Prostate gland (tissue), 2 donors: ENCODE measurements at regions of chr22 and their contacts with region 1.

Region 1: DNA sequence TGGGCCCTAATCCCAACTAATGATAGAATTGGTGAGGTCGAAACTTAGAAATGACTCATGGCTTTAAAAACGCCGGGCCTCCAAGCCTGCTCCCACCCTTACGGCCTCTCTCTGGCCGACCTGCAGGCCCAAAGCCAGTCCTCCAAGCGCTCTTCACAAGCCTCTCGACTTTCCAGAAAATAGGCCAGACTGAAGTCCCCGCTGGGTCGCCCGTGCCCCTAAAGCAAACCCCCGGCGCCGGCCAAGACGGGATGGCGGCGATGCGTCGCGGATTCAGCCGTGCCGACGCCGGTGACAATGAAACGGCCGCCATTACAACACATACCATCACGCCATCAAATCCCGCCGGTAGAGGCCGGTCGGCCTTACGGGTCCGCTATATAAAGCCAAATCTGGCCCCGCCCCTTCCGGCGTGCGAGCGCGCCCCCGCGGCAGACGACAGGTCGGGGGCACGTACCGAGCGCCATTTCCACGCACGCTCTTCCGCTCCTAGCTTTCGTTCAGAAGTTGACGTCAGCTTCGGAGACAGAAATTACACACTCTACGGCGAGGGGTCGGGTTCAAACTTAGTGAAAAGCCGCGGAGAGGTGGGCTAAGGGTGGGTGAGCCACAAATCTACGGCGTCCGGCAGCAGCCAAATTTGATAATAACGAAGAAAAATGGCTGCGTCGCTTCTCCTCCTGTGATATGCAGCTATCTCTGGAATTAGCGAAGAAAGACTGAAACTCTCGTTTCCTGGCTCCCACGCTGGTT is at the start of gene RPL3:
- DNase-seq: peak; percentile 96
- H3K4me3 ChIP-seq: peak within 1 kb of the TSS; percentile 55 to 61
- H3K27ac ChIP-seq: peak within 1 kb of the TSS; percentile 95 to 96
- H3K4me1 ChIP-seq: peaks cover 21% of the 10 kb centered on the region
- H3K27me3 ChIP-seq: no peaks in the 10 kb centered on the region
- CTCF ChIP-seq: peak in 3 of 4 experiments; percentile 40 to 62 (median 47)
- POLR2A ChIP-seq: peak; percentile 78
- total RNA-seq, gene RPL3: 2,375 to 2,654 TPM

Region 2: DNA sequence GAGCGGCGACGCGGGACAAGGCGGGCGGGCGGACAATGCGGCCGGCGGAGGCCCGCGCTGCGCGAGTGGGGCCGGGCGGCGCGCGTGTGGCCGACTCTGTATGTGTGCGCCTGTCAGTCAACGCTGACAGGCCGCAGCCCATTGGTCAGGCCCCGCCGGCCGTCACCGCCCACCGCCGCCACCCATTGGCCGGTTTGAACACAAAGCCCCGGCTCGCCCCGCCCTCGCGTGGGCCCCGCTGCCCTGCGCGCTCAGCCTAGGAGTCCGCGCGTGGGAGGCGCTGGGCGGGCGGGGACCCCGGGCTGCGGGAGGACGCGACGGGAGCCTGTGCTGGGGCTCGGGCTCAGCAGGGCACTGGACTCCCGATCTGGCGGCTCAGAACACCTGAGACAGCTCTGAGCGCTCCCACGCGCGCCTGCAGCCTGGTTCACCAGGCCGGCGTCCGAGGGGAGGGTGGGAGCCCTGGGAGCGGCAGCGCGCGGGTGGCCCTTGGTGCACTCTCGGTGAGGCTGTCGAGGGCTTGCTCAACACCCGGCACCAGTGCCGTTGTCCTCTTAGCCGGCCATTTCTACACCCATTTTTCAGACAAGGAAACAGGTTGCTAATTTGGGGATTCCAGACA is 563.4 kb before region 1 on chr22 and contains the start of gene SUN2:
- intact Hi-C with region 1: loop called (anchors 10 kb)
- DNase-seq: peak; percentile 95
- H3K4me3 ChIP-seq: peak within 1 kb of the TSS; percentile 73 to 82
- H3K27ac ChIP-seq: peak within 1 kb of the TSS; percentile 97 to 99
- H3K4me1 ChIP-seq: peaks cover 20% of the 10 kb centered on the region
- H3K27me3 ChIP-seq: no peaks in the 10 kb centered on the region
- CTCF ChIP-seq: no peak
- POLR2A ChIP-seq: peak; percentile 80
- total RNA-seq, gene SUN2: 401 to 445 TPM

Region 3: DNA sequence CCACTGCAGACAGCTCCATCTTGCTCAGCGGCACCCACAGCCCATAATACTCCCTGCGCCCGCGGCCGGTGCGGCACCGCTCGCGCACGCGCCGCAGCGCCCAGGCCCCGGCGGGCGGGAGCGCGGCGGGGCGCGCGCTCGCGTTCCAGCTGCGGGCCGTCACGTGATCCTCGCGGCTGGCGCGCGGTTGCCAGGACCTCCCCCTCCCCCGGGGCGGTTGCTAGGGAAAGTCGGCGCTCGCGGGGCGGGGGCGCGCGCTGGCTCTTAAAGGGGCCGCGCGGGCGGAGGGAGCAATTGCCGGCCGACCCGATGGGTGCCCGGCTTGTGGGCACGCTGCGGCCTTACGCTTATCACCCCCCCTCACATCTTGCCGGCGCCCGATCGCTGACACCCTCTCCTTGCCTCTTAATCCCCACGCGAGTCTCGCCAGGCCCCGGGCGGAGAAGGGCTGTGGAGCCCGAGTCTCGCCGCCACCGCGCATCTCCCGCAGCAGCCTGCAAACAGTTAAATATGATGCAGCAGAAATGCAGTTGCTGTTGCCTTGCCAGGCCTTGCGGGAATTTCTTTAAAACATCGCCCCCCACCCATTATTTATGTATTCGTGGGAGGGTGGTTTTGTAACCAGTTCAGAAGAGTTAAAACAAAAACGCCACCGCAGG is 447.1 kb before region 1 on chr22 and contains the start of gene CBX6:
- intact Hi-C with region 1: loop called (anchors 5 kb)
- DNase-seq: peak; percentile 93
- H3K4me3 ChIP-seq: peak within 1 kb of the TSS; percentile 66 to 81
- H3K27ac ChIP-seq: peak within 1 kb of the TSS; percentile 93 to 94
- H3K4me1 ChIP-seq: peaks cover 9% of the 10 kb centered on the region
- H3K27me3 ChIP-seq: no peaks in the 10 kb centered on the region
- CTCF ChIP-seq: peak in 2 of 4 experiments; percentile 14 to 16
- POLR2A ChIP-seq: peak; percentile 60
- total RNA-seq, gene CBX6: 39.9 to 56.2 TPM

Region 4: GRCh38 chr22:39013942-39014722 is 305.3 kb before region 1 on chr22 and contains the start of gene APOBEC3C:
- intact Hi-C with region 1: loop called (anchors 10 kb)
- DNase-seq: peak; percentile 85
- H3K4me3 ChIP-seq: peak within 1 kb of the TSS; percentile 38 to 39
- H3K27ac ChIP-seq: peak within 1 kb of the TSS; percentile 85 to 88
- H3K4me1 ChIP-seq: no peaks in the 10 kb centered on the region
- H3K27me3 ChIP-seq: no peaks in the 10 kb centered on the region
- CTCF ChIP-seq: peak in 1 of 4 experiments; percentile 32
- POLR2A ChIP-seq: peak; percentile 89
- total RNA-seq, gene APOBEC3C: 21.4 to 52.3 TPM

Region 5: DNA sequence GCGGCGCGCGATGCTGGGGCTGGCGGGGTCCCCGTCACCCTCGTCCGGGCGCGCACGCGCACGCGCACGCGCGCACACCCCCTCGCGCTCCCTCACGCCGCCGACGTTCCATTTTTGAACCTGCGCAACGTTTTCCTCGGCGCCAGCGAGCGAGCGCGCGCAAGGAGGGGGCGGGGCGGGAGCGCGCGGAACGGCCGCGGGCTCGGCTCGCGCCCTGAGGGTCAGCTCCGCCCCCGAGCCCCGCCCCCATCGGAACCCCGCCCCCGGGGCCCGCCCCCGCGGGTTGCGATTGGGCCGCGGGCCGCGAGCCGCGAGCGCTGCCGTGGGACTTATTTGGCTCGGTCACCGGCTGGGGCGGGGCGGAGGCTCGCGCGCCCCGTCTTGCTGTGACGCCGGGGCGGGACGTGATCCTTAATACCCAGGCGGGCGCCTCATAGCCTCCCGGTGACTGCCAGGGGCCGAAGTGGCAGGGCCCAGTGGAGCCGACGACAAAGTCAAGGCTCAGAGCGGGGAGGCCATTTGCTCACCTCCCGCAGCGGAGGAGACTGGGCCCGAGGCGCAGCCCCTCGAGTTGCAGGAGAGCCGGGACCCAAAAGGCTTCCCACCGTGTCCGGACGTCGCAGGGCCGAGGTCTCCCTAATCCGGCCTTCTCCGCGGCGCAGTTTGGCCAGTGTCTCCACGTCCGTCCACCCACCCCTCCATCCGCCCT is 166.8 kb before region 1 on chr22 and contains the start of gene CBX7:
- intact Hi-C with region 1: loop called (anchors 5 kb)
- DNase-seq: peak; percentile 93
- H3K4me3 ChIP-seq: peak within 1 kb of the TSS; percentile 70 to 83
- H3K27ac ChIP-seq: peak within 1 kb of the TSS; percentile 97 to 98
- H3K4me1 ChIP-seq: peaks cover 14% of the 10 kb centered on the region
- H3K27me3 ChIP-seq: no peaks in the 10 kb centered on the region
- CTCF ChIP-seq: peak in 1 of 4 experiments; percentile 4
- POLR2A ChIP-seq: peak; percentile 93
- total RNA-seq, gene CBX7: 82.7 to 115 TPM

Region 6: GRCh38 chr22:39170825-39171622 is 148.4 kb before region 1 on chr22:
- intact Hi-C with region 1: loop called (anchors 1 kb)
- DNase-seq: peak; percentile 80
- H3K4me3 ChIP-seq: no peak overlapping the region
- H3K27ac ChIP-seq: no peak overlapping the region
- H3K4me1 ChIP-seq: peaks cover 23% of the 10 kb centered on the region
- H3K27me3 ChIP-seq: no peaks in the 10 kb centered on the region
- CTCF ChIP-seq: peak; percentile 92 to 99 (median 98)
- POLR2A ChIP-seq: no peak

Region 7: GRCh38 chr22:39532215-39533071 is 213.0 kb after region 1 on chr22 and contains the start of gene RPS19BP1:
- intact Hi-C with region 1: loop called (anchors 2 kb)
- DNase-seq: peak; percentile 100
- H3K4me3 ChIP-seq: peak within 1 kb of the TSS; percentile 63 to 94
- H3K27ac ChIP-seq: peak within 1 kb of the TSS; percentile 85 to 90
- H3K4me1 ChIP-seq: peaks cover 34% of the 10 kb centered on the region
- H3K27me3 ChIP-seq: no peaks in the 10 kb centered on the region
- CTCF ChIP-seq: peak in 1 of 4 experiments; percentile 20
- POLR2A ChIP-seq: peak; percentile 87
- total RNA-seq, gene RPS19BP1: 186 to 264 TPM